CD8-positive, alpha-beta memory T cell (primary cell): ENCODE measurements at regions of chr17 and their contacts with region 1.

Region 1: DNA sequence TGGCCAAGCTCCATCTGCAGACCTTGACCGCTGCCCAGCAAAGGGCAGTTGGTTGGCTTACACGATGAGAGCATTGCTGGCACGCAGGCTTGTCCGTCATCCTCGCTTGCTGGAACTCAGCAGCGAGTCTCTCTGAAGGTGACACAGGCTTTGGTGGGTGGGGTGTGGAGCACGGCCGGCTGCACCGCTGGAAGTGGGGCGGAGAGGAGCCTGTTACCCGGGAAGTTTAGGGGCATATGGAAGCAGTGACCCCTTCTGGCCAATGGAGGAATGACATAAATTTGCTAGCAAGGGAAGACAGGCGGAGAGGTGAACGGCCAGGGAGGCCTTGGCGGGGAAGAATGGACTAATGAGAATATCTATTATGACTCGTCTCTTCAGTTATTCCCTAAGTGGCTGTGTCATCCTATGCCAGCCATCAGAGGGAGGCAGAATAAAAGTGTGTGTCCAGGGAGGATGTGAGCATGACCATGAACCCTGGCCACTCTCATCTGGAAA is 65.9 kb upstream of the SDK2 start:
- DNase-seq: peak; percentile 21 to 71 (median 38)
- H3K4me3 ChIP-seq: no peak overlapping the region
- H3K4me3 Mint-ChIP-seq: no peak overlapping the region
- H3K27ac ChIP-seq: no peak overlapping the region
- H3K27ac Mint-ChIP-seq: peak overlapping the region in 1 of 8 donors; percentile 58
- H3K4me1 ChIP-seq: peaks cover 10% of the 10 kb centered on the region
- H3K4me1 Mint-ChIP-seq: peaks cover 4 to 6% (median 5%) of the 10 kb centered on the region in 3 donors
- H3K27me3 ChIP-seq: no peaks in the 10 kb centered on the region
- H3K27me3 Mint-ChIP-seq: peaks cover 11 to 54% of the 10 kb centered on the region in 2 donors

Region 2: DNA sequence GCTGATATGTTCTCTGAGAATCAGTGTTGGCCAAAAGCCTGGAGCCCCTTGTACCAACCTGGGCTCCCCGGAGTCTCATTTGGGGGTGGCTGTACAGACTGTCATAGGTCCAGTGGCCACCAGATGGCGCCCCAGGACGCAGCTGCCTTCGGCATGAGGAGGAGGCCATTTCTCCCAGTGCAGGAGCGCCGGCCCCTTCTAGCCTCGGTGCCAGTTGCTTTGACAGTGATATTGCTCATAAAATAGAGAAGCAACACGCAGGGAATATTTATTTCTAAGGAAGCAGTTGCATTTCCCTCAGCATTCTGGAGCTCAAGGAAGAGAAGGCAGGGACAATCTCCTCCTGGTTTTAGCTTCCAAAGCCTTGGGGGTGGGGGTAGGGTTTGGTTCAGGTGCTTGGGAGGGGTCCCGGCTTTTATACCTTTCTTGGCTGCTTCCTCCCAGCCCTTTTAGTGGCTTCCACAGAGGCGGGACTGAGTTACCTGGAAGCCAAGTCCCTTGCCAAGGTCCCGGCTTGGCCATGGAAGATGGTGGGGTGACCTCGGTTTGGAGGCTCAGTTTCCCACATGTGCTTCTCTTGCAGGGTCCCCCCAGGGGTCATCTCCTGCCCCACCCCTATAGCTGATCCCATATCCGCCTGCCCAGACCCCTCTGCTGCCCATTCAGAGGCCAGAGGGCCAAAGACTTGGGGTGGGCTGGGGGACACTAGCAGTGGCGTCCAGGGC is 280.5 kb before region 1 on chr17:
- CTCF ChIA-PET with region 1: interaction called, 112 read pairs
- POLR2A ChIA-PET with region 1: no interaction called
- DNase-seq: peak; percentile 65 to 87 (median 75)
- H3K4me3 ChIP-seq: peak overlapping the region; percentile 30
- H3K4me3 Mint-ChIP-seq: no peak overlapping the region
- H3K27ac ChIP-seq: no peak overlapping the region
- H3K27ac Mint-ChIP-seq: peak overlapping the region in 1 of 8 donors; percentile 13
- H3K4me1 ChIP-seq: peaks cover 6% of the 10 kb centered on the region
- H3K4me1 Mint-ChIP-seq: peaks cover 0 to 6% (median 5%) of the 10 kb centered on the region in 3 donors
- H3K27me3 ChIP-seq: no peaks in the 10 kb centered on the region
- H3K27me3 Mint-ChIP-seq: peaks cover 3 to 4% of the 10 kb centered on the region in 2 donors

Region 3: DNA sequence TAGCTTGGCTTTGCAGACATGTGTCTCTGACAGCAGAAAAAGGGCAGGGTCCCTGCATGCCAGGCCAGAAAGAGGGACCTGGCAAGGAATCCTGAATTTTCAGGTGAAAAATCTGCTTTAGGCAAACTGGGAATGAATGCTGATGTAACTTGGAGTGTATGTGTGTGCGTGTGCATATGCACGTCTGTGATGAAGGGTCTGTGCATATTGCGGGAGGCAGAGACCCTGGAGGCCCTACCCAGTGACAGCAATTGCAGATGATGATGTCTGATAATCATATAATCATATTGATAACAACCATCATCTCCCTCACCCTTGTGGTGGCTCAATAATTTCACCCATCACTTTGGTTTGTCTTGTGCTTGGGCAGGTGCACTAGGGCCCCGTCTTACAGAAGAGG is 14.8 kb after region 1 on chr17:
- CTCF ChIA-PET with region 1: interaction called, 21 read pairs
- POLR2A ChIA-PET with region 1: no interaction called
- DNase-seq: no peak
- H3K4me3 ChIP-seq: no peak overlapping the region
- H3K4me3 Mint-ChIP-seq: no peak overlapping the region
- H3K27ac ChIP-seq: no peak overlapping the region
- H3K27ac Mint-ChIP-seq: no peak overlapping the region
- H3K4me1 ChIP-seq: peaks cover 40% of the 10 kb centered on the region
- H3K4me1 Mint-ChIP-seq: peaks cover 25 to 34% (median 27%) of the 10 kb centered on the region in 3 donors
- H3K27me3 ChIP-seq: no peaks in the 10 kb centered on the region
- H3K27me3 Mint-ChIP-seq: peaks cover 3 to 6% of the 10 kb centered on the region in 2 donors